MCF 10A (cell line): ENCODE measurements at regions of chr3 and their contacts with region 1.

Region 1: DNA sequence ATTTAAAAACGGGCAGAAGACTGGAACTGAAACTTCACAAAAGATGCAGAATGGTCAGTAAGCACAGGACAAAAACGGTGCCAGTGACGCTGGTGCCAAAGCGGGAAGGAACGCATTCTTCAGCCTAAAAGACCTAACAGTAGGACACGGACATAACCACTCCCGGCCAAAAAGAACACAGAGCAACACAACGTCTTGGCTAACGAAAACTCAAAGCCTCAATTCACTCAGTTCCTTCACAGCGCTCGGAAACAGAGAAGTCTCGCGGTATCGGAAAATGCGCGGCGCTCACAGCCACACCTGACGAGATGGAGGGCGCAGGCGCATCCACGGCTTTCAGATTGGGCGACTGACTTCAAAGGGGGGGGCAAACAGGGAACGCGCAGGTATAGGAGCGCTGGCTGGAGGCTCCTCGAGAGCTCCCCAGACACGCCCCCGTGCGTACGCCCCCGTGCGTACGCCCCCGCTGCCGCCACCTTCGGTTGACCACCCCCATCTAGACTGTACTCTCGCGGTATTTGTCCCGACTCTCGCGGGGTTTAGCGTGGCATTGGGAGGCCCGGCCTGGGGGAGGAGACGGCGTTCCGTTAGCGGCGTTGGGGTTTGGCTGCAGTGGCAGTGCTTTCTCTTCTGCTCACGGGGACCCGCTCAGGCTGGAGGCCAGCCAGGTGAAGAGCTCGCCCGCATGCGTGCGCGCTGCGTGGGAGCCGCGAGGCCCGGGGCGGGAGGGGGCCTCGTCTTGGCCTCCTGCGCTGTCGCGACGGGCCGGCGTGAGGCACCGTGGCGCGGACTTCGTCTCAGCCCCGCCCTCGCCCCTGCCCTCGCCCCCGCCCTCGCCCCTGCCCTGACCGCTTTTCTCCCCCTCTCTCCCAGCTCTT is at the start of gene NKTR:
- DNase-seq: peak; percentile 99
- H3K4me3 Mint-ChIP-seq: peak within 1 kb of the TSS; percentile 82
- H3K27ac Mint-ChIP-seq: peak within 1 kb of the TSS; percentile 90
- H3K4me1 Mint-ChIP-seq: peaks cover 10% of the 10 kb centered on the region
- H3K27me3 Mint-ChIP-seq: no peaks in the 10 kb centered on the region
- CTCF ChIP-seq: no peak
- total RNA-seq, gene NKTR: 63.4 and 63.5 TPM in 2 replicates

Region 2: GRCh38 chr3:42581709-42582473 is 18.5 kb before region 1 on chr3 and contains the start of gene SEC22C:
- CTCF ChIA-PET with region 1: interaction called, 30 read pairs
- POLR2A ChIA-PET with region 1: interaction called, 101 read pairs
- intact Hi-C with region 1: loop called (anchors 1 kb)
- DNase-seq: peak; percentile 96
- H3K4me3 Mint-ChIP-seq: peak within 1 kb of the TSS; percentile 78
- H3K27ac Mint-ChIP-seq: peak within 1 kb of the TSS; percentile 66
- H3K4me1 Mint-ChIP-seq: peaks cover 29% of the 10 kb centered on the region
- H3K27me3 Mint-ChIP-seq: no peaks in the 10 kb centered on the region
- CTCF ChIP-seq: peak; percentile 20
- total RNA-seq, gene SEC22C: 52.1 and 55.7 TPM in 2 replicates

Region 3: DNA sequence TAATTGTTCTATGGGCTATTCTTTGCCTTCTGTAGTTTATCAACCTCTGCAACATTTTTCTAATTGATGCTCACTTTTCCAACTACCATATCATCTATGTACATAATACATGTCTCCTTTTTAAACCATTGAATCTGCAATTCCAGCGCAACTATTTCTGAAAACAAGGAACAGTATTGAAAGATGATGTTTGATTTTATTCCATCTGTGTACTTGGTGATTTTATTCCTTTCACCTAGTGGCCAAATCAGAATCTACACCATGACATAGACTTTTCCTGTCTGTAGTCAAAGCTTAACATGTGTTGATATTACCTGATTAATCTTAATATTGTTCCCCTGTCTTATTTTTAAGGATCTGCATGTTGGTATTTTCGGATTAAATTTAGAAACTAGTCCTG is 13.1 kb after region 1 on chr3:
- CTCF ChIA-PET with region 1: interaction called, 15 read pairs
- POLR2A ChIA-PET with region 1: interaction called, 35 read pairs
- intact Hi-C with region 1: no loop called
- DNase-seq: peak; percentile 32
- H3K4me3 Mint-ChIP-seq: no peak overlapping the region
- H3K27ac Mint-ChIP-seq: no peak overlapping the region
- H3K4me1 Mint-ChIP-seq: peaks cover 16% of the 10 kb centered on the region
- H3K27me3 Mint-ChIP-seq: no peaks in the 10 kb centered on the region
- CTCF ChIP-seq: peak; percentile 34

Region 4: GRCh38 chr3:42652611-42653302 is 52.4 kb after region 1 on chr3:
- CTCF ChIA-PET with region 1: interaction called, 7 read pairs
- POLR2A ChIA-PET with region 1: interaction called, 25 read pairs
- intact Hi-C with region 1: loop called (anchors 5 kb)
- DNase-seq: peak; percentile 88
- H3K4me3 Mint-ChIP-seq: peak overlapping the region; percentile 90
- H3K27ac Mint-ChIP-seq: peak overlapping the region; percentile 89
- H3K4me1 Mint-ChIP-seq: peaks cover 41% of the 10 kb centered on the region
- H3K27me3 Mint-ChIP-seq: no peaks in the 10 kb centered on the region
- CTCF ChIP-seq: no peak